ENCODE measurements at regions of chr17 and their contacts with region 1.

Region 1: GRCh38 chr17:75904749-75905521 is at the start of gene MRPL38:
- DNase-seq: peak; percentile 91 to 96 (median 94)
- ATAC-seq: peak; percentile 91 to 96 (median 94)
- H3K4me3 ChIP-seq: peak within 1 kb of the TSS; percentile 62 to 95 (median 90)
- H3K27ac ChIP-seq: peak within 1 kb of the TSS; percentile 82 to 96 (median 92)
- H3K4me1 ChIP-seq: peaks cover 0 to 32% (median 11%) of the 10 kb centered on the region in 12 donors
- H3K27me3 ChIP-seq: no peaks in the 10 kb centered on the region
- CTCF ChIP-seq: peak in 11 of 12 donors; percentile 96 to 100 (median 99)
- POLR2A ChIP-seq: peak in 1 of 2 donors; percentile 79
- total RNA-seq, gene MRPL38: 54.8 to 126 (median 106) TPM

Region 2: GRCh38 chr17:75940724-75941441 is 35.9 kb after region 1 on chr17 and contains the start of gene FBF1:
- intact Hi-C with region 1: loop called in 1 of 10 experiments (anchors 5 kb)
- DNase-seq: peak; percentile 94 to 97 (median 96)
- ATAC-seq: peak; percentile 97 to 100 (median 99)
- H3K4me3 ChIP-seq: peak within 1 kb of the TSS; percentile 58 to 96 (median 81)
- H3K27ac ChIP-seq: peak within 1 kb of the TSS in 11 of 12 donors; percentile 45 to 89 (median 74)
- H3K4me1 ChIP-seq: peaks cover 0 to 15% (median 9%) of the 10 kb centered on the region in 12 donors
- H3K27me3 ChIP-seq: no peaks in the 10 kb centered on the region
- CTCF ChIP-seq: peak in 3 of 12 donors; percentile 6 to 28 (median 9)
- POLR2A ChIP-seq: peak; percentile 28 to 93
- total RNA-seq, gene FBF1: 1.5 to 5.4 (median 2.9) TPM

Region 3: GRCh38 chr17:75978938-75979704 is 74.2 kb after region 1 on chr17 and contains the starts of genes ACOX1 and TEN1:
- intact Hi-C with region 1: loop called in 2 of 10 experiments (anchors 2 kb)
- DNase-seq: peak; percentile 98 to 99 (median 99)
- ATAC-seq: peak; percentile 97 to 99 (median 98)
- H3K4me3 ChIP-seq: peak within 1 kb of the TSS; percentile 59 to 93 (median 79)
- H3K27ac ChIP-seq: peak within 1 kb of the TSS; percentile 92 to 100 (median 98)
- H3K4me1 ChIP-seq: peaks cover 0 to 64% (median 35%) of the 10 kb centered on the region in 12 donors
- H3K27me3 ChIP-seq: no peaks in the 10 kb centered on the region
- CTCF ChIP-seq: peak in 11 of 12 donors; percentile 8 to 64 (median 34)
- POLR2A ChIP-seq: peak; percentile 25 to 94
- total RNA-seq, gene ACOX1: 65.5 to 117 (median 84.8) TPM
- total RNA-seq, gene TEN1: 3.3 to 15.6 (median 8.6) TPM

Region 4: GRCh38 chr17:76005263-76006149 is 100.6 kb after region 1 on chr17:
- intact Hi-C with region 1: loop called (anchors 1 to 2 kb)
- DNase-seq: peak; percentile 71 to 83 (median 76)
- ATAC-seq: peak; percentile 41 to 78 (median 63)
- H3K4me3 ChIP-seq: no peak overlapping the region
- H3K27ac ChIP-seq: peak overlapping the region in 1 of 12 donors; percentile 17
- H3K4me1 ChIP-seq: peaks cover 0 to 7% (median 0%) of the 10 kb centered on the region in 12 donors
- H3K27me3 ChIP-seq: no peaks in the 10 kb centered on the region
- CTCF ChIP-seq: peak; percentile 48 to 81 (median 72)
- POLR2A ChIP-seq: no peak

Region 5: GRCh38 chr17:76278952-76279741 is 374.2 kb after region 1 on chr17:
- intact Hi-C with region 1: loop called in 1 of 10 experiments (anchors 10 kb)
- DNase-seq: peak; percentile 81 to 94 (median 85)
- ATAC-seq: peak; percentile 81 to 93 (median 87)
- H3K4me3 ChIP-seq: peak overlapping the region in 1 of 12 donors; percentile 2
- H3K27ac ChIP-seq: no peak overlapping the region
- H3K4me1 ChIP-seq: peaks cover 0 to 20% (median 5%) of the 10 kb centered on the region in 12 donors
- H3K27me3 ChIP-seq: no peaks in the 10 kb centered on the region
- CTCF ChIP-seq: peak; percentile 95 to 100 (median 99)
- POLR2A ChIP-seq: no peak